ENCODE measurements at regions of chr3 and their contacts with region 1.

Region 1: DNA sequence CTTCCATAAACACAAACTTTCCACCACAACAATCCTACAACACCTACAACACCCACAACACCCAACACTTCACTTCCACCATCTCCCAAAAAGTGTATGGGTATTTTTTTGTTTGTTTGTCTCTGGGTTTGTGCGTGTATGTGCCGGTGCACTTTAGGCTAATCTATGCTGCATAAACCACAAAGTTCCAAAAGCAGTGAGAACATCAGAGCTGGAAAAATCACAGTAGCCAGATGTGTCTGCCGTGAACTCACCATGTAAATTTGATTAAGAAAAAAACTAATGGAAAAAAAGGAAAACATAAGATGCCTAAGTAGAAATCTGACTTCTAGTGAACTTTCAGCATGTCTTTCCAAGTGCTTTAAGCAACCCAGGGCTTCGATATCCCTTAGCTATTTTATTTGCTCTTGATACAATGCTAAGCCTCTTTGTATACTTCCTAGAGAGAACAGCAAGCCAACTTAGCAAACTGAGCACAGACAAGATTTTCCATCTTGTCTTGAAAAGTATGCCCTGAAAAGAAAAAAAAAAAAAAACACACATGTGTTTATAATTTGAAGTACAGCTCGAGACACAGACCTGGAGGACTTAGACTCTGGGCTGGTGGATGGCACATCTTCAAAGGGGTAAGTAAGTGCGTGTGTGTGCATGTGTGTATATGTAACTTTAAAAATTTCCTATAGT is 91.4 kb downstream of the WWTR1 start:
- DNase-seq: no peak
- ATAC-seq: no peak
- H3K4me3 ChIP-seq: no peak overlapping the region
- H3K27ac ChIP-seq: no peak overlapping the region
- H3K4me1 ChIP-seq: peaks cover 8 to 15% of the 10 kb centered on the region in 2 experiments
- H3K27me3 ChIP-seq: no peaks in the 10 kb centered on the region
- CTCF ChIP-seq: no peak
- POLR2A ChIP-seq: no peak
- RAD21 ChIP-seq: no peak

Region 2: DNA sequence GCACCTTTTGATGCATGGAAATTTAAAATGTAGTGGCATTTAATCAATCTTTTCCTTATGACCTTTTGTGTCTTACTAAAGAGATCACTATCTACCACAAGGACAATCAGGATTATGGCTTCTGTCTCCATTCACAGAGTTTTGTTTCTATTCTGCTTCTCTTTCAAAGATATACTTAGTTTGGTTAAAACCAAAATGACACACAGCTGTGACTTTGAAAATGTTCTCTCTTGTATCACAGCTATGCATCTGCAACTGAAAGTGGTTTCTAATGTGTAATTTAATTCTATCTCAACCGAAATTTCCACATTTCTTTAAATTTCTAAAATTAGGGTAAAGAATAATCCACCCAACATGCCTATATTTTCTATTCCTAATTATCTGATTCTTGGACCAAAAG is 507.8 kb before region 1 on chr3:
- CTCF ChIA-PET with region 1: no interaction called
- POLR2A ChIA-PET with region 1: no interaction called
- RAD21 ChIA-PET with region 1: no interaction called
- intact Hi-C with region 1: no loop called
- DNase-seq: no peak
- ATAC-seq: no peak
- H3K4me3 ChIP-seq: no peak overlapping the region
- H3K27ac ChIP-seq: no peak overlapping the region
- H3K4me1 ChIP-seq: no peaks in the 10 kb centered on the region
- H3K27me3 ChIP-seq: no peaks in the 10 kb centered on the region
- CTCF ChIP-seq: no peak
- POLR2A ChIP-seq: no peak
- RAD21 ChIP-seq: no peak

Region 3: DNA sequence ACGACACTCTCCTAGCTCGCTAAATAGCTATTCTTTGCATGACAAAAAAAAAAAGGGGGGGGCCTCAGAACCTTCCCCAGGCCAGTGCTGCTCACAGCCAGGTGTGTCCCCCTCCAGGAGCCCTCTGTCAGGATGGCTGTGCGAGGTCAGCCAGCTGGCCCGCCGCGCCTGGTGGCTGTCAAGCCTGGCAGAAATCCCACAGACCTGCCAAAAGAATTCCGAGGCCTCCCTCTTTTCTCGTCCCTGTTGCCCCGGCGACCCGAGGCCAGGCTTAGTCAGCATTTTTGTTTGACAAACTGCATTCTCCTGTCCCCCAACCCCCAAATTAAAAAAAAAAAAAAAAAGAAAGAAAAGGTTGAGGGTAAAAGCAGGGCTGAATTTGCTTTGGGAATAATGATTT is 30.0 kb before region 1 on chr3:
- CTCF ChIA-PET with region 1: interaction called, 10 read pairs
- POLR2A ChIA-PET with region 1: no interaction called
- RAD21 ChIA-PET with region 1: no interaction called
- intact Hi-C with region 1: no loop called
- DNase-seq: no peak
- ATAC-seq: no peak
- H3K4me3 ChIP-seq: no peak overlapping the region
- H3K27ac ChIP-seq: no peak overlapping the region
- H3K4me1 ChIP-seq: peaks cover 0 to 9% of the 10 kb centered on the region in 2 experiments; a peak in 1 of 4 replicates
- H3K27me3 ChIP-seq: no peaks in the 10 kb centered on the region
- CTCF ChIP-seq: no peak
- POLR2A ChIP-seq: no peak
- RAD21 ChIP-seq: no peak

Region 4: DNA sequence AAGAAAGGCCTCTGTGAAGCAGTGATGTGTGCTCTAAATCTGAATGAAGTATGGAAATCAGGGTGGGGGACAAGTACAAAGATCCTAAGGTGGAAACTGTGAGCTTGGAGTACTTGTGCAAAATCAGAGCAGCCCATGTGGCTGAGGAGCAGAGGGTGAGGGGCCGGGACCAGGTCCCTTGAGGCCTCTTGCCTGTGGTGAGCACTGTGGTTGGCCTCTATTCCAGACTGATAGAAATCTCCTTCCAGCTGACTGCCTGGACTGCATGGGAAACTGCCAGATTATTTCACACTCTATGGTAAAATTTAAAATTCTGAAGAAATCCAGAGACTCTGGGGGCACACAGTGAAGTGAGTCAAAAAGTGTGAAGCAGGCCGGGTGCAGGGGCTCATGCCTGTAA is 10.5 kb before region 1 on chr3:
- CTCF ChIA-PET with region 1: interaction called, 15 read pairs
- POLR2A ChIA-PET with region 1: interaction called, 3 read pairs
- RAD21 ChIA-PET with region 1: no interaction called
- intact Hi-C with region 1: no loop called
- DNase-seq: no peak
- ATAC-seq: no peak
- H3K4me3 ChIP-seq: no peak overlapping the region
- H3K27ac ChIP-seq: no peak overlapping the region
- H3K4me1 ChIP-seq: peaks cover 8 to 25% of the 10 kb centered on the region in 2 experiments; a peak in 3 of 4 replicates
- H3K27me3 ChIP-seq: no peaks in the 10 kb centered on the region
- CTCF ChIP-seq: no peak
- POLR2A ChIP-seq: no peak
- RAD21 ChIP-seq: no peak

Region 5: GRCh38 chr3:149657926-149658733 is 91.7 kb after region 1 on chr3 and contains the start of gene WWTR1:
- CTCF ChIA-PET with region 1: interaction called, 19 read pairs
- POLR2A ChIA-PET with region 1: interaction called, 5 read pairs
- RAD21 ChIA-PET with region 1: interaction called in 1 of 2 experiments, 4 read pairs
- intact Hi-C with region 1: loop called (anchors 2 kb)
- DNase-seq: peak; percentile 82
- ATAC-seq: peak; percentile 88
- H3K4me3 ChIP-seq: peak within 1 kb of the TSS; percentile 68 to 72
- H3K27ac ChIP-seq: peak within 1 kb of the TSS; percentile 89
- H3K4me1 ChIP-seq: peaks cover 23 to 67% of the 10 kb centered on the region in 2 experiments
- H3K27me3 ChIP-seq: no peaks in the 10 kb centered on the region
- CTCF ChIP-seq: peak in 1 of 3 experiments; percentile 11; a peak in 1 of 6 replicates
- POLR2A ChIP-seq: peak; percentile 92
- RAD21 ChIP-seq: peak; percentile 52
- total RNA-seq, gene WWTR1: 46.9 TPM

Region 6: GRCh38 chr3:149717391-149718056 is 151.1 kb after region 1 on chr3:
- CTCF ChIA-PET with region 1: interaction called, 19 read pairs
- POLR2A ChIA-PET with region 1: interaction called, 4 read pairs
- RAD21 ChIA-PET with region 1: interaction called in 1 of 2 experiments, 3 read pairs
- intact Hi-C with region 1: loop called (anchors 1 kb)
- DNase-seq: peak; percentile 65
- ATAC-seq: peak; percentile 83
- H3K4me3 ChIP-seq: no peak overlapping the region
- H3K27ac ChIP-seq: no peak overlapping the region
- H3K4me1 ChIP-seq: peaks cover 2 to 9% of the 10 kb centered on the region in 2 experiments; a peak in 3 of 4 replicates
- H3K27me3 ChIP-seq: no peaks in the 10 kb centered on the region
- CTCF ChIP-seq: peak; percentile 66 to 83 (median 75)
- POLR2A ChIP-seq: no peak
- RAD21 ChIP-seq: peak; percentile 83

Region 7: DNA sequence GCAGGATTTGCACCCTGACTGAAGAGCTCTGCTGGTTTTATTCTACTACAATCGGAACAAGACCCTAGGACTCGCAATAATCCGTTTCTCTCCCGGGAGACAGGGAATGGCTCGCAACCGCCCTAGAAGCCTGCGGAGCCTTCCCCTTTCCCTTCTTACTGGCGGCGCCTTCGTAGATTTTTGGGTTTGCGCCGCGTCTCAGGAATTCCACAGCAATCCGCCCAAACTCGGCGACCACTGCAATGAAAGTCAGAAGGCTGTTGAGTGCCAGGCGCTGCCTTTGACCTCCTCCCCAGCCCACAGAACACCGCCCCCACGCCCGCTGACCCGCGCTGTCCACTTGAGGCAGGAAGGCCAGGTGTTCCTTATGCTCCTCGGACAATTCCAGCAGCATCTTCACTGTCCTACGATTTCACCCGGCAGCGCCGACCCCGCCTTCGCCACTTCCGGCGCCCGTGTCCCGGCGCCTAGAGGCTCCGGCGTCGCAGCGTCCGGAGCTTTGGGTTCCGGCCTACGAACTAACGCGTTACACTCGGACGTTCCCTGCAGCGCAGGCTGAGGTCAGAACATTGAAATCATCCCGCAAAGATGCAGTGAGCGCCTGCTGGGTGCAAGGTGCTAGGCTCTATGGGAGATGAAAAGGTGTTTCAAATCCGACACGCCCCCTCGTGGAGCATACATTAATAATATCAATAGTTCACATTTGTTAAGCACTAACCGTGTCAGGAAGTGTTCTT is 185.8 kb after region 1 on chr3 and contains the start of gene COMMD2:
- CTCF ChIA-PET with region 1: interaction called, 10 read pairs
- POLR2A ChIA-PET with region 1: interaction called, 3 read pairs
- RAD21 ChIA-PET with region 1: no interaction called
- intact Hi-C with region 1: loop called (anchors 5 kb)
- DNase-seq: peak; percentile 97
- ATAC-seq: peak; percentile 100
- H3K4me3 ChIP-seq: peak within 1 kb of the TSS; percentile 93 to 95
- H3K27ac ChIP-seq: peak within 1 kb of the TSS; percentile 49
- H3K4me1 ChIP-seq: peaks cover 3 to 15% of the 10 kb centered on the region in 2 experiments; a peak in 3 of 4 replicates
- H3K27me3 ChIP-seq: no peaks in the 10 kb centered on the region
- CTCF ChIP-seq: peak; percentile 47 to 80 (median 55)
- POLR2A ChIP-seq: no peak
- RAD21 ChIP-seq: peak; percentile 75
- total RNA-seq, gene COMMD2: 35.5 TPM

Measured in HCT116 (cell line).